Dorsolateral prefrontal cortex (tissue), 120 donors: ENCODE measurements at regions of chr18 and their contacts with region 1.

Region 1: GRCh38 chr18:55878224-55878623 is 290.2 kb upstream of the TCF4 start:
- DNase-seq: no peak
- H3K4me3 ChIP-seq: no peak overlapping the region
- H3K27ac ChIP-seq: peak overlapping the region in 1 of 59 donors; percentile 25
- H3K27me3 ChIP-seq: no peaks in the 10 kb centered on the region
- CTCF ChIP-seq: no peak

Region 2: DNA sequence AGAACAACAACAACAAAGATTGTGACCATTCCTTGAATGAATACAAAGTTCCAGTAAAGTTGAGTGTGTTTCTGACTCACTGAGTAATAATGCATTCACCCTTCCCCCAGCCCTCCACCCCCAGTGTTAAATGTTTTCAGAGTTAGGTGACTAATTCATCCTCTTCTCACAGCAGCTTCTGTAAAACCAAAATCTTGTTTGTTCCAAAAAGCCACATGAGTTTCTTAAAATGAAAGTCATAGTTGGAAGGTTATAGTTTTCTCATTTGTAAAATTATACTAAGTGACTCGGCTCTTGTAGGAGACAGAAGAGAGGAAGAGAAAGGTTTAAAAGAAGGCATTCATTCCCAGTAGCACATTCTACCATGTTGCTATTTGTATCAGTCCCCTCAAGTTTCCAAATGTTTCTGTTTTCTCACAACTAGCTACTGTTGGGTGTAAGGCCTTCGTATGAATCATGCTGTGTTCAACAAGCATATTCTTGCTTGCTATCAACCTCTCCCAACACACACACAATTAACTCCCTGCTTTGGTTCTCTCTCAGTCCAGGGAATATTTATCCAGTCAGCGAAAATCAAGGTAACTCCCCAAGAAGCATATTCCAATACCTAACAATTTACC is 1729.0 kb before region 1 on chr18:
- intact Hi-C with region 1: no loop called
- DNase-seq: peak in 2 of 10 donors; percentile 30 to 43
- H3K4me3 ChIP-seq: no peak overlapping the region
- H3K27ac ChIP-seq: peak overlapping the region in 10 of 59 donors; percentile 10 to 71 (median 42)
- H3K27me3 ChIP-seq: no peaks in the 10 kb centered on the region
- CTCF ChIP-seq: no peak

Region 3: GRCh38 chr18:55136864-55137263 is 741.4 kb before region 1 on chr18:
- intact Hi-C with region 1: no loop called
- DNase-seq: no peak
- H3K4me3 ChIP-seq: no peak overlapping the region
- H3K27ac ChIP-seq: no peak overlapping the region
- H3K27me3 ChIP-seq: no peaks in the 10 kb centered on the region
- CTCF ChIP-seq: no peak

Region 4: GRCh38 chr18:55731594-55732042 is 146.6 kb before region 1 on chr18:
- intact Hi-C with region 1: no loop called
- DNase-seq: no peak
- H3K4me3 ChIP-seq: no peak overlapping the region
- H3K27ac ChIP-seq: no peak overlapping the region
- H3K27me3 ChIP-seq: peaks cover 0 to 3% (median 0%) of the 10 kb centered on the region in 45 donors
- CTCF ChIP-seq: no peak

Region 5: GRCh38 chr18:55811925-55812324 is 66.3 kb before region 1 on chr18:
- intact Hi-C with region 1: no loop called
- DNase-seq: no peak
- H3K4me3 ChIP-seq: no peak overlapping the region
- H3K27ac ChIP-seq: no peak overlapping the region
- H3K27me3 ChIP-seq: no peaks in the 10 kb centered on the region
- CTCF ChIP-seq: no peak

Region 6: DNA sequence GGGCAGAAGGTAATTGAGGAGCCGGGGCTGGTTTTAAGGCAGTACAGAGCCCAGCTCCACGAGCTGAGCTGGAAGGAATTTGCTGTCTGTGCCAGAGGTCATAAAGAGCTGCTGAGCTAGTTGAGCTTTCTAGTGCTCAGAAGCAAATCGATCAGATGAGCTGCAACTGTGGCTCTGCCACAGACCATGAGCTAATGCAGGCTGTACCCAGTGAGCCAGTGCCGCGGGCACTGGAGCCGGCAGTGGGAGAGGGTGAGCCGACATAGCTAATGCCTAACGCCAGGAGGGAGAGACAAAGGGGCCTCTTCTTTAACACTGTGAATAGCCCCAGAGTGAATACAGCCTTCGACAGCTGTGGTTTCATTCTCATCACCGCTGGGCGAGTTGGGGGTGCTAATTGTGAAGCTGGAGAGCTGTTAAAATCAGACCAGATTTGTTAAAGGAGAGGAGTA is 119.9 kb after region 1 on chr18:
- intact Hi-C with region 1: loop called in 1 of 2 experiments (anchors 5 kb)
- DNase-seq: peak; percentile 8 to 86 (median 73)
- H3K4me3 ChIP-seq: peak overlapping the region in 56 of 59 donors; percentile 8 to 65 (median 38)
- H3K27ac ChIP-seq: peak overlapping the region; percentile 25 to 97 (median 91)
- H3K27me3 ChIP-seq: no peaks in the 10 kb centered on the region
- CTCF ChIP-seq: peak in 13 of 56 donors; percentile 10 to 35 (median 23)